Activated CD4-positive, alpha-beta T cell treated with anti-CD3 and anti-CD28 coated beads for 36 hours (primary cell): ENCODE measurements at regions of chr3 and their contacts with region 1.

Region 1: DNA sequence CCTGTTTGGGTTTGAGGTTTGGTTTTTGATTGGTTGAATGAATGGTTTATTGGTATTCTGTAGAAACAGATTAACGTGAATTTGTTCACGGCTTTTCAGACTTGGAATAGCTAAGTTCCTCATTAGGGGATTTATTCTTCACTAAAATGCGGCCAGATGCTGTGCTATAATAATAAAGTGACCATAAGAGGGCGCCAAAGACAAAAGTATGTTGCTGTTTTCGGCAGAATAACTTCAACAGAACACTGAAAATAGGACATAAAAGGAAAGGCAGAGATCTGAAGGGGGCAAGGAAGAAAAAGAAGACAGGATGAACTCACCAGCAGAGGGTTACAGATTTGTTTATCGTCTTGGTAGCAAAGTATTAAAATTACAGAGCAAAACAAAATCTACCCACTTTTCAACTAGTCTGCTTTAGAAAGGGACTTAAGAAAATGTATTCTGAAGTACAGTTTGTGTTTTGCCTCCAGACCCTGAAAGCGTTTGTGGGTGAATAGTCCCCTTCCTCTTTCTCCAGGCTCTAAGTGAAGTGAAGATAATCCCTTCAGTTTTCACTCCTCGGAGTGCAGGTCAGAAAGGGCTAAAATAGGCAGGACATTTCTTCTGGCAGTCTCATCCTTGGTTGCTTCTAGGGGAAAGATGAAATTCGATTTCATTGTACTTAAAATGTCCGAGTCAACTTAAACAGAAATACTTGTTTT is 147.6 kb downstream of the IL20RB start:
- DNase-seq: no peak
- ATAC-seq: peak; percentile 51
- H3K4me3 Mint-ChIP-seq: no peak overlapping the region
- H3K27ac Mint-ChIP-seq: no peak overlapping the region
- H3K4me1 Mint-ChIP-seq: no peaks in the 10 kb centered on the region
- H3K27me3 Mint-ChIP-seq: peaks cover 13% of the 10 kb centered on the region

Region 2: GRCh38 chr3:136690599-136690998 is 414.8 kb before region 1 on chr3:
- CTCF ChIA-PET with region 1: no interaction called
- POLR2A ChIA-PET with region 1: no interaction called
- intact Hi-C with region 1: no loop called
- DNase-seq: no peak
- ATAC-seq: peak; percentile 21
- H3K4me3 Mint-ChIP-seq: no peak overlapping the region
- H3K27ac Mint-ChIP-seq: no peak overlapping the region
- H3K4me1 Mint-ChIP-seq: peaks cover 31% of the 10 kb centered on the region
- H3K27me3 Mint-ChIP-seq: no peaks in the 10 kb centered on the region

Region 3: DNA sequence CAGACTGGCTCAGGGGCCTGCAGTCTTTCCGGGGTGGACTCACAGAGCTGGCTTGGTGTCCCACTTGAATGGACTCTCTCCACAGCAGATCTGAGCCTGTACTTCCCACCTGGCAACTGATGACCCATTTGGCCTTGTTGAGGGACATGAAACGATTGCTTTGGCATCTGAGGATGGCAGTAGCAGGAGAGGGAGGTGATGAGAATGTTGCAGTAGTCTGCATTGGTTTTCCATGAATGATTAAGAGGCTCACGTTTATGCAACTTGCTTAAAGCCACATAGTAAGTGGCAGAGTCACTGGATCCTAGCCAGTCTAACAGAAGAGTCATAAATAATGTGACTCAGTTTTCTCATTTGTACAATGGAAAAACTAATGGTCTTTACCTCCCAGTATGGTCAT is 125.7 kb before region 1 on chr3:
- CTCF ChIA-PET with region 1: no interaction called
- POLR2A ChIA-PET with region 1: no interaction called
- intact Hi-C with region 1: no loop called
- DNase-seq: no peak
- ATAC-seq: peak; percentile 12
- H3K4me3 Mint-ChIP-seq: no peak overlapping the region
- H3K27ac Mint-ChIP-seq: no peak overlapping the region
- H3K4me1 Mint-ChIP-seq: peaks cover 4% of the 10 kb centered on the region
- H3K27me3 Mint-ChIP-seq: no peaks in the 10 kb centered on the region

Region 4: GRCh38 chr3:137032465-137033120 is 72.8 kb before region 1 on chr3:
- CTCF ChIA-PET with region 1: interaction called, 9 read pairs
- POLR2A ChIA-PET with region 1: no interaction called
- intact Hi-C with region 1: loop called (anchors 1 to 5 kb)
- DNase-seq: peak; percentile 92
- ATAC-seq: peak; percentile 93
- H3K4me3 Mint-ChIP-seq: peak overlapping the region; percentile 54
- H3K27ac Mint-ChIP-seq: no peak overlapping the region
- H3K4me1 Mint-ChIP-seq: peaks cover 7% of the 10 kb centered on the region
- H3K27me3 Mint-ChIP-seq: peaks cover 22% of the 10 kb centered on the region

Region 5: DNA sequence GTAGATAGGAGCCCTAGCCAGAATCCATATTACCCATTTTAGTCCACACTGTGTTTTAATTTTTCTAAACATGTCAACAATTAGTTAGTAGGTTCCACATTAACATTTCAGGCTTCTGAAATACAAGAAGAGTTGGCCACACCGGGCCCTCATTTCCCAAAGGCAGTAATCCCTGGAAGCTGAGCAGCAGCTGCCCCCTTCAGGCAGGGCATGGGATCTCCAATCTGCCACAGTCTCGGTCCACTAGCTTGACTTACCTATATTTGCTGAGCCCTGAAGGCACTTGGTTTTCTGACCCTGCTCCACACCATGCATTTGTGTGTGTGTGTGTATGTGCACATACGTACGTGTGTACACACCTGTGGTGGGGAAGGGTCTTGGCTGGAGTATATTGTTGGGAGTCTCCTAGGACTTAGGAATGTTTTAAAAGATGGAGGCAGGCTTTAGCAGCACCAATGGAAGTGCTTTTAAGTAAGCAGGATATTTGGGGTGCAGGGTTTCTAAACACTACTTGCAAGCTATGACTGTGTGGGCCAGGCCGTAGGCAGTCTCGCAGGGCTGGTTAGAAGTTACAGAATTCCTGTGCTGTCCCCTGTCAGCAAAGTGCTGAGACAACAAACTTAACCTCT is 587.5 kb after region 1 on chr3:
- CTCF ChIA-PET with region 1: no interaction called
- POLR2A ChIA-PET with region 1: no interaction called
- intact Hi-C with region 1: loop called in 1 of 2 experiments (anchors 2 kb)
- DNase-seq: peak; percentile 30
- ATAC-seq: no peak
- H3K4me3 Mint-ChIP-seq: no peak overlapping the region
- H3K27ac Mint-ChIP-seq: no peak overlapping the region
- H3K4me1 Mint-ChIP-seq: no peaks in the 10 kb centered on the region
- H3K27me3 Mint-ChIP-seq: no peaks in the 10 kb centered on the region

Region 6: DNA sequence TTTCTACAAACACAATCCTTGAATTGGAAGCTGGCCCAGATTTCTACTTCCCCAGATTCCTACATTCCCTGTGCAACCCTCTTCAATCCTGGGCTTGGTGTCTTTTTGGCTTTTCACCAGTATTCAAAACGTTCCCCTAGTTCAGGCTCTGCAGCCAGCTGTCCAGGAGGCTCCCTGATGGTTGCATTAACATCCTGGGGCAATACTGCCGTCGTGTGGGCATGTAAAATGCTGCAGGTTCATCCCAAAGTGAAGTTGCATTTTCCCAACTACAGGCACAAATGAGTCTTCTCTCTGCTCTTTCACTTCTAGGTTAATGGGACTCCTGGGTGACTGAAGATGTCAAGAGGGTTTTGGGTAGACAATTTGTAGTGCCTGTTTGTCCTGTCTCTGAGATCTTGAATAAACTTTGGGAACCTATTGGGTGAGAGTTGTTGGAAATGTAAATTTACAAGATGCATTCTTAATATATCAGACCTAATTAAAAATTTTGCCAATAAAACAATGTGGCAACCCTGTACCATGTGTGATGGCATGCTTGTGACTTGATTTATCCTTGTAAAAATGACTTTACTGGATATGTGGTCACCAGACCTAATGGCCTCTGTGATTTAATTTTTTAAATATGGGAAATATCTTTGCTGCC is 687.3 kb after region 1 on chr3:
- CTCF ChIA-PET with region 1: no interaction called
- POLR2A ChIA-PET with region 1: no interaction called
- intact Hi-C with region 1: loop called (anchors 5 kb)
- DNase-seq: peak; percentile 42
- ATAC-seq: no peak
- H3K4me3 Mint-ChIP-seq: no peak overlapping the region
- H3K27ac Mint-ChIP-seq: no peak overlapping the region
- H3K4me1 Mint-ChIP-seq: no peaks in the 10 kb centered on the region
- H3K27me3 Mint-ChIP-seq: peaks cover 6% of the 10 kb centered on the region

Region 7: DNA sequence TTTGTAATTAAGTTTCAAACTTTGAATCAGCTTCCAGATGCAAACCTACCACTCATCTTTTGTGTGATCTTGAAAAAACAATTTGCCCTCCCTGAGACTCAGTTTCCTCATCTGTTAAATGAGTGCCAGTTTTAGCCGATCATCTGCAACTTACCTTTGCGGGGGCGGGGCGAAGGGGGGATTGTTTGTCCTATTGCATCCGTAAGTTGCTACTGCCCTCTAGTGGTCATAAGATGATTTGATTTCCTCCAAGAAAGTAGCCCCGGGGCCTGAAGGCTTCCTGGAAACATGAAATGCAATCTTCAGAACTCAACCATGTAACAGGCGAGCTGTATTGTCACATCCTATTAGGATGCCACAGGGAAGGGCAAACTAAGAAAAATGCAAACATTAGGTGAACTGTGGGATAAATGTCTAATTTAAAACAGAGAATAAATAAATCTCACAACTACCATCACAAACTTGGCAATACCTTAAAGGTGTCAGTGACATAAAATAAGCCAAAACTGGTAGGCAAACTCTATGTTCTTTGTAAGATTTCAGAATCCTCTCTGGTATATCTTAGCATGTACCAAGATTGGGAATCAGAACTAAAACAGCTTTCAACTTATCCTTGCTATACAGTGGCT is 841.0 kb after region 1 on chr3:
- CTCF ChIA-PET with region 1: interaction called, 9 read pairs
- POLR2A ChIA-PET with region 1: no interaction called
- intact Hi-C with region 1: loop called in 1 of 2 experiments (anchors 1 kb)
- DNase-seq: peak; percentile 71
- ATAC-seq: peak; percentile 47
- H3K4me3 Mint-ChIP-seq: no peak overlapping the region
- H3K27ac Mint-ChIP-seq: no peak overlapping the region
- H3K4me1 Mint-ChIP-seq: peaks cover 5% of the 10 kb centered on the region
- H3K27me3 Mint-ChIP-seq: no peaks in the 10 kb centered on the region

Region 8: DNA sequence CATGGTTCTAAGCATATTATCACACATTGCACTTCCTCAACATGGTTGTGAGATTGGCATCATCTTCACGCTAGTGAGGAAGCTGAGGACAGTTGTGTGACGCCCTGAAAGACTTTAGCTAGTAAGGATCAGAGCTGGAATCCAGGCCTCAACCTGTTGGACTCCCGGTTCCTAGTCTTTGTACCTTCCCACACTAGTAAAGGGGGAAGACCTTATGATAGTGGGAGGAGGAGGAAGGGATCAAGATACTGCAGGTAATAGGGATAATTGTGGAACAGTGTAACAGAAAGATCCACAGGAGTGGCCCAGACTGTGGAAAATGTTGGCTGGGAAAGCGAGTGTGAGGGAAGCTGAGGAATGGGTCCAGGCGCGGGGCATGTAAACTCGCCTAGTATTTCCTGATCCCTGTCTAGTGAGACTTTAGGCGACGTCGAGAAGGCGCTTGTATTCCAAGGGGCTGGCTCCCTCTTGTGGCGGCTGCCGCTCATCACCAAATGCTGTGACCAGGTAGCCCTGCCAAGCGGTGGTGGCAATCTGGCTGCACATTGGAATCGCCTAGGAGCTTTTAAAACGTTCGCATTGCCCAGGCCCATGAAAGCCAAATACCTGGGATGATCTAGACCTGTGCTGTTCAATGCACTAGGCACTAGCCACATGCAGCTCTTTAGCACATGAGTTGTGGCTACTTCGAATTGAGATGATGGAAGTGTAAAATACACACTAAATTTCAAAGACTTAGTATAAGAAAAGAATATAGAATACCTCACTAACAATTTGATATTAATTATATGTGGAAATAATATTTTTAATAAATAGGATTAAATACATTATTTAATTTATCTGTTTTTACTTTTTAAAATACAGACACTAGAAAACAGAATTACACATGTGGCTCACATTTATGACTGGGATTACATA is 865.7 kb after region 1 on chr3:
- CTCF ChIA-PET with region 1: interaction called, 6 read pairs
- POLR2A ChIA-PET with region 1: no interaction called
- intact Hi-C with region 1: loop called (anchors 1 to 5 kb)
- DNase-seq: peak; percentile 83
- ATAC-seq: peak; percentile 49
- H3K4me3 Mint-ChIP-seq: no peak overlapping the region
- H3K27ac Mint-ChIP-seq: no peak overlapping the region
- H3K4me1 Mint-ChIP-seq: no peaks in the 10 kb centered on the region
- H3K27me3 Mint-ChIP-seq: peaks cover 13% of the 10 kb centered on the region

Region 9: GRCh38 chr3:138051946-138052802 is 946.7 kb after region 1 on chr3:
- CTCF ChIA-PET with region 1: no interaction called
- POLR2A ChIA-PET with region 1: no interaction called
- intact Hi-C with region 1: loop called in 1 of 2 experiments (anchors 10 kb)
- DNase-seq: peak; percentile 55
- ATAC-seq: no peak
- H3K4me3 Mint-ChIP-seq: no peak overlapping the region
- H3K27ac Mint-ChIP-seq: no peak overlapping the region
- H3K4me1 Mint-ChIP-seq: no peaks in the 10 kb centered on the region
- H3K27me3 Mint-ChIP-seq: peaks cover 22% of the 10 kb centered on the region